PC-3 (cell line): ENCODE measurements at regions of chr18 and their contacts with region 1.

Region 1: DNA sequence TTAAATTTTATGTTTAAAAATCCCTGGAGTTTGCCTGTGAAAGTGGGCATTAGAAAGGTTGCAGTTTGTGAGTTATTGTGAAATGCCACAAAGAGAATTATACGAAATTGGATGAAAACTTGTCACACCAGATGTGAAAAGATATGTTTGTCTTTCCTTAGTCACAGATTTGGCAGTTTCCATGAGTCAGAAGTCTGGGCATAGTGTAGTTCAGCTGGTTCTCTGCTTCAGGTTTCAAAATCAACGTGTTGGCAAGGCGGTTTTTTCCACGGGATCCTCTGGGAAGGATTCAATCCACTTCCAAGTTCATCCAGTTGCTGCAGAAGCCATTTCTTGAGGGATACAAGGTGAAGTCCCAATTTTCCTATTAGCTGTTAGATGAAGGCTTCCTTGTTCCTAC is 658.0 kb upstream of the CDH2 start:
- DNase-seq: peak; percentile 90
- ATAC-seq: peak; percentile 97
- H3K4me3 ChIP-seq: peak overlapping the region; percentile 36
- H3K27ac ChIP-seq: peak overlapping the region; percentile 88
- H3K4me1 ChIP-seq: peaks cover 15% of the 10 kb centered on the region
- H3K27me3 ChIP-seq: no peaks in the 10 kb centered on the region
- CTCF ChIP-seq: no peak

Region 2: DNA sequence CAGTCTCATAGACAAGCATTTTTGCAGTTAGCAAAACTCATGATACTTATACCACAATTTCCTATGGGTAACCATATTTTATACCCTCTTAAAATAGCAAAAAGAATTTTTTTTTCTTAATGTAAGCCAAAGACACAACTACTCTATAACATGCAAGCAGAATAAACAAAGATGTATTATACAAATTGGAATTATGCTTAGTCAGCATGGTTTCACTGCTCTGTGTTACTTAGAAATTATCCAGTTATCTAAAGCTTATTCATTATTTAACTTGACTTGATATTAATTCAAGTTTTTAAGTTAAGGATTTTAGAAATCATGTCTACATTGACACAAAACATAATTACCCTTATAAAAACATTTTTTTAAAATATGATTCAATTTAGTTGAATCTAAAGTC is 208.1 kb before region 1 on chr18:
- CTCF ChIA-PET with region 1: no interaction called
- POLR2A ChIA-PET with region 1: interaction called, 15 read pairs
- intact Hi-C with region 1: no loop called
- DNase-seq: no peak
- ATAC-seq: no peak
- H3K4me3 ChIP-seq: no peak overlapping the region
- H3K27ac ChIP-seq: no peak overlapping the region
- H3K4me1 ChIP-seq: no peaks in the 10 kb centered on the region
- H3K27me3 ChIP-seq: no peaks in the 10 kb centered on the region
- CTCF ChIP-seq: no peak

Region 3: DNA sequence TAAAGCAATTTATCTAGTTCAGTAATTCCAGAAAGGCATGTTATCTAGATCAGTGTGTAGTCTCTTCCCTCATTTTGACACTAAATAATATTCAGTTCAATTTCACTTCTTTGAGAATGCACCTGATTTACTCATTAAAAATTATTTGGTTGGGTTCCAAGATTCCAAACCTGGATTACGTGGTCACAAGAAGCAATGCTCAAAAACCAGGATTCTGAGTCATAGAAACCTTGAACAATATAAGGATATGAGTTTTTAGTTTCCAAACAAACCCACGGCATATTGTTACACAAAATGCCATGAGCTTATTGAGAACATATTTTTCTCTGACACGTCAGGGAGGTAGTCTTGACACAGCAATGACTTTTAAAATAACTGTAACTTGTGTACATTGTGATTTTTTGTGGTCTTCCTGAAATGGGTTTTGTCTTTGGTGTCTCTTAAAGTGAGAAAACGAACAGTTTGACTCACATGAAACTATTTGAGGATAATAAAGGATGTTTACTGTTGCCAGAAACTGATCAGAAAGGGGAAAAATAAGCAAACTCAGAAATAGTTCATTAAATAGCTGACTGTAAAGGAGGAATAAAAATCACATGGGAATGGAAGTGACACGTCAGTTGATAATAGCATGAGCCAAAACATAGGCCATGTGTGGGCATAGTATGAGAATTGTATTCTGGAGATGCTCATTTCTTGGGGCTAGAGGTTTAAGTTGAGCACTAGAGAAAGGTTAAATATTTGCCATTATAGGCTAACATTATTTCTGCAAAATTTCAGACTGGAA is 40.2 kb before region 1 on chr18:
- CTCF ChIA-PET with region 1: no interaction called
- POLR2A ChIA-PET with region 1: no interaction called
- intact Hi-C with region 1: loop called (anchors 2 kb)
- DNase-seq: peak; percentile 97
- ATAC-seq: peak; percentile 92
- H3K4me3 ChIP-seq: peak overlapping the region; percentile 5; the same call in 1 of the 2 replicates
- H3K27ac ChIP-seq: peak overlapping the region; percentile 89
- H3K4me1 ChIP-seq: peaks cover 51% of the 10 kb centered on the region
- H3K27me3 ChIP-seq: no peaks in the 10 kb centered on the region
- CTCF ChIP-seq: no peak

Region 4: DNA sequence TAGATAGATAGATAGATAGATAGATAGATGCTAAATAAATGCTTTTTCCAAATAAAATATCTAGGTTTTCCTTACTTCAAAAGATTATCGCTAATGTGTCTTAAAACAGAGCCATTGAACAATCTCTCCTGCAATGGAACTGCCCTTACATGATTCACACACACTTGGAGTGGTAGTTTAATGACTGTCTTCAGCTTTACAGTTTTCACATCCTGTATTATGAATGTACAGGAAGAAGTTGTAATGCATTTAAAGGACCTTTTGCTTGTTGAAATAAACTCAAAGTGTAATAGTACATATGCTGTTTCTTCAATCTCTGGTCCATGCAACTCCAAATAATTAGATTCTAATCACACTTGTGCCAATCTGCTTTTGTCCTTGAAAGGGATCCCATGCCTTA is 139.6 kb after region 1 on chr18:
- CTCF ChIA-PET with region 1: no interaction called
- POLR2A ChIA-PET with region 1: no interaction called
- intact Hi-C with region 1: no loop called
- DNase-seq: peak; percentile 26
- ATAC-seq: peak; percentile 53; the same call in 1 of the 2 replicates
- H3K4me3 ChIP-seq: no peak overlapping the region
- H3K27ac ChIP-seq: no peak overlapping the region
- H3K4me1 ChIP-seq: peaks cover 4% of the 10 kb centered on the region; the same call in 1 of the 2 replicates
- H3K27me3 ChIP-seq: no peaks in the 10 kb centered on the region
- CTCF ChIP-seq: no peak